Mammary epithelial cell (primary cell): ENCODE measurements at regions of chr17 and their contacts with region 1.

Region 1: DNA sequence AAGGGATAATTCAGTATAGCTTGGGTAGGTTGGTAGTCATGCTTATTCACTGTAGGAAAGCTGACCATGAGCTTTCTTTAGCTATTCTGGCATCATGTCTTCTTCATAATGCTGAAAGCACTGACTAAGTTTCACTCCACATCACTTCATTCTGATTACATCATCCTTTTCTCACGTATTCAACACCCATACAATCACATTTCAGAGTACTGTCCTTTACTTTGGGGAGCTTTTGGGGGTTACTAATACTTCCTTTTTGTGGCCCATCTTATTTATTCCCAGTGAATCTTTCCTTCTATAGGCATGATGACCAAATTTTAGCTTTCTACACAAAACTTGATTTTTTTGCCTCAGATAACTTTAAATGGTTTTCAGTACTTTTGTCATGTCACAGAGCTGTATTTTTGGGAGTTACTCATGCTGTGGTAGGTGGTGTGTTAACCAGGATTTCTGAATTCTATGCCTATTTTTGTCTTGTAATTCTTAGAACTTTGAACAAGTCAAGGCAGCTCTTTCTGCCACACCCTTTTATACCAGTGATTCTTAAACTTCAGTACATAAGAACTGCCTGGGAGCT is 23.5 kb downstream of the TADA2A start:
- DNase-seq: peak; percentile 88
- H3K4me3 ChIP-seq: peak overlapping the region in 1 of 3 experiments; percentile 24
- H3K27ac ChIP-seq: peak overlapping the region; percentile 97
- H3K4me1 ChIP-seq: peaks cover 20% of the 10 kb centered on the region
- H3K27me3 ChIP-seq: no peaks in the 10 kb centered on the region
- CTCF ChIP-seq: no peak

Region 2: DNA sequence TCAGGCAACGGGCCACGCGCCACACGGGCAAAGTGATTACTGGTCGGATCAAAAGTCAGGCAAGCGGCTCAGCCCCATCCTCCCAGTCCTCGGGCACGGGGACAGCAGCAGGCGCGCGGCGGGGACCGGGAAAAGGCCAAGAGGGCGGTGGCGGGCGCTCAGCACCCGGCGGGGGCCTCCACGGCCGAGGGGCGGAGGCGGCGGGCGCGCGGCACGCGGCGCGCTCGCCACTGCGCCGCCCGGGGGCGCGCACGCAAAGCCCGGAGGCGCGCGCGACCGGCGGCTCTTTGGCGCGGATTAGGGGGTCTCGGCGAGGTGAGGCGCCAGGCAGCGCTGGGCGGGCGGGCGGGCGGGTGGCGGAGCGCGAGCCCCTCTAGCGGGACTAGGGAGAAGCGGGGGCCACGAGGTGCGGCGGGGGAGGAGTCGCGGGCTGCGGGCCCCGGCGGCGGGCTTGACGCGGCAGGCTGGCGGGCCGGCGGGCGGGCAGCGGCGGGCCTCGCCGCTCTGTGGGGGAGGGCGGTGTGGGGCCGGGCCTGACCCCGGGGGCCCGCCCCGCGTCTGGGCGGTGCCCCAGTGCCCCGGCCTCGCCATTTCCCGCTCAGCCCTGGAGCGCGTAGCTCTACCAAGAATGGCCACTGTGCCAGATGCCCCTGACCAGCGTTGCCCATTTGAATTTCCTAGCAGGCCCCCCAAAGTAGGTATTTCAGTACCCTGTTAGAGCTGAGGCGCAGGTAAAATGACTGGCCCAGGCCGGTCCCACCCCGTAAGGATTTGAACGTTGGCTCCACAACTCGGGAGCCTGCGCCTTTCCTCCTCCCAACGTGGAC is 23.3 kb before region 1 on chr17 and contains the starts of genes ACACA and TADA2A:
- CTCF ChIA-PET with region 1: no interaction called
- dilution Hi-C with region 1: no loop called
- in situ Hi-C with region 1: no loop called
- intact Hi-C with region 1: loop called (anchors 2 kb)
- DNase-seq: peak; percentile 80
- H3K4me3 ChIP-seq: peak within 1 kb of the TSS; percentile 89 to 99 (median 97)
- H3K27ac ChIP-seq: peak within 1 kb of the TSS; percentile 80
- H3K4me1 ChIP-seq: peaks cover 8% of the 10 kb centered on the region
- H3K27me3 ChIP-seq: no peaks in the 10 kb centered on the region
- CTCF ChIP-seq: no peak
- total RNA-seq, gene ACACA: 74.3 to 121 TPM
- total RNA-seq, gene TADA2A: 10.3 to 19.1 TPM

Region 3: DNA sequence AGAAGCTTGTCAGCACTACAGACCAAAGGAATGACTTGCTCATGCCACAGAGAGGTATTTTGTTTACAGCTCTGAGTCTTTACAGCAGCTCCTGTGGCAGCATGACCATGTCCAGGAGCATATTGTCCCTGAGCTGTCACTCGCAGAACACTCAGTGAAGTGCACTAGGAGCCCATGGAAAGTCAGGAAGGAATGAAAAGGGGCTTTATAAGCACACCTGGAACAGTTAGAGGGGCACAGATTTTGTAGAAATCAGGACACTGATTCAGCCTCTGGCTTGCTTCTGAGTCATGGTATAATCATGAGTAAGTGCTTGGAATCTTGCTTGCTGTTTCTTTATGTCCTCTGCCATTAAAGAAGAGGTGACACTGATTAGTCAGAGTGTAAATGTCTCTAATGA is 17.5 kb after region 1 on chr17:
- CTCF ChIA-PET with region 1: no interaction called
- dilution Hi-C with region 1: no loop called
- in situ Hi-C with region 1: no loop called
- intact Hi-C with region 1: loop called (anchors 2 kb)
- DNase-seq: peak; percentile 49
- H3K4me3 ChIP-seq: no peak overlapping the region
- H3K27ac ChIP-seq: peak overlapping the region; percentile 18
- H3K4me1 ChIP-seq: peaks cover 37% of the 10 kb centered on the region
- H3K27me3 ChIP-seq: no peaks in the 10 kb centered on the region
- CTCF ChIP-seq: no peak

Region 4: GRCh38 chr17:37476431-37477120 is 46.4 kb after region 1 on chr17:
- CTCF ChIA-PET with region 1: no interaction called
- dilution Hi-C with region 1: no loop called
- in situ Hi-C with region 1: no loop called
- intact Hi-C with region 1: loop called (anchors 1 kb)
- DNase-seq: peak; percentile 75
- H3K4me3 ChIP-seq: no peak overlapping the region
- H3K27ac ChIP-seq: peak overlapping the region; percentile 93
- H3K4me1 ChIP-seq: peaks cover 31% of the 10 kb centered on the region
- H3K27me3 ChIP-seq: no peaks in the 10 kb centered on the region
- CTCF ChIP-seq: no peak